Activated naive CD4-positive, alpha-beta T cell treated with anti-CD3 and anti-CD28 coated beads, Interleukin-2, amount 10 ng/mL, durations not matched to agents 7 days and 5 days (primary cell): ENCODE measurements at regions of chr11 and their contacts with region 1.

Region 1: DNA sequence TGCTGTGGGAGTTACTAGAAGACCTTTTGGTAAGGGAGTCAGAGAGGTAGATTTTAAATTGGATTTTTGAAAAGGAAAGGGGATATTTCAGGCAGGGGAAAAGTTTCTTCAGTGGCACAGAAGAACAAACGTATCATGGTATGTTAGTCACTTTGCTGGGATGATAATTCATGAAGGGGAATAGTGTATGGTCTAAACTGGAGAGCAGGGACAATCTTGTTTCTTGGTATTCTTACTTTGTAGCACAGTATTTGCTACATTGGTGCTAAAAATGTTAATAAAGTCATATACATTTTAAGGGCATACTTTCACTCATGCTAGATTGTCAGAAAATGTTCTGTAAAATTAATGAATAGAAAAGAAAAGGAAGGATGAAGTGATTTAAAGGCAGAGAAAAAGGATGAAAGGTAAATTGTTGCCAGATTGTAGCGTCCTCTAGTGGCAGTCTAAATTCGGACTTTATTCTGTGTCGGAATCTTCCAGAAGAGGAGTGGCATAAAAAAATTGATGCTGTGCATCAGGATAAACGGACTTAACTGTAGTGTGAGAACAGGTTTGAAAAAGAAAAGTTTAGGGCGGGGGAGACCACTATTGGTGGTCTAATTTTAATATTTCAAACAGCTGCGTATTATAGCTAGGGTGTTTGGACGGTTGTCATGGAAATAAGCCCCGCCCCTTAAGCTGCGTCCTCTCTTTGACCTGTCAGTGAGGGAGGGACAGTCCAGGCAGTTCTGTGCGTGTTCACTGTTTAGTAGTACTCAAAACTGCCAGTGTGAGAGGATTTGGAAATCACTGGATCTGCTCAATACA is at the start of gene BCO2:
- DNase-seq: peak; percentile 59
- H3K4me3 Mint-ChIP-seq: no peak within 1 kb of the TSS
- H3K27ac Mint-ChIP-seq: no peak within 1 kb of the TSS
- H3K4me1 Mint-ChIP-seq: peaks cover 11% of the 10 kb centered on the region
- H3K27me3 Mint-ChIP-seq: peaks cover 28% of the 10 kb centered on the region

Region 2: GRCh38 chr11:112113539-112114457 is 61.2 kb before region 1 on chr11:
- CTCF ChIA-PET with region 1: interaction called, 13 read pairs
- DNase-seq: no peak
- H3K4me3 Mint-ChIP-seq: no peak overlapping the region
- H3K27ac Mint-ChIP-seq: no peak overlapping the region
- H3K4me1 Mint-ChIP-seq: peaks cover 12% of the 10 kb centered on the region
- H3K27me3 Mint-ChIP-seq: no peaks in the 10 kb centered on the region

Region 3: GRCh38 chr11:112132737-112133136 is 42.3 kb before region 1 on chr11:
- CTCF ChIA-PET with region 1: no interaction called
- DNase-seq: no peak
- H3K4me3 Mint-ChIP-seq: no peak overlapping the region
- H3K27ac Mint-ChIP-seq: no peak overlapping the region
- H3K4me1 Mint-ChIP-seq: peaks cover 4% of the 10 kb centered on the region
- H3K27me3 Mint-ChIP-seq: no peaks in the 10 kb centered on the region

Region 4: DNA sequence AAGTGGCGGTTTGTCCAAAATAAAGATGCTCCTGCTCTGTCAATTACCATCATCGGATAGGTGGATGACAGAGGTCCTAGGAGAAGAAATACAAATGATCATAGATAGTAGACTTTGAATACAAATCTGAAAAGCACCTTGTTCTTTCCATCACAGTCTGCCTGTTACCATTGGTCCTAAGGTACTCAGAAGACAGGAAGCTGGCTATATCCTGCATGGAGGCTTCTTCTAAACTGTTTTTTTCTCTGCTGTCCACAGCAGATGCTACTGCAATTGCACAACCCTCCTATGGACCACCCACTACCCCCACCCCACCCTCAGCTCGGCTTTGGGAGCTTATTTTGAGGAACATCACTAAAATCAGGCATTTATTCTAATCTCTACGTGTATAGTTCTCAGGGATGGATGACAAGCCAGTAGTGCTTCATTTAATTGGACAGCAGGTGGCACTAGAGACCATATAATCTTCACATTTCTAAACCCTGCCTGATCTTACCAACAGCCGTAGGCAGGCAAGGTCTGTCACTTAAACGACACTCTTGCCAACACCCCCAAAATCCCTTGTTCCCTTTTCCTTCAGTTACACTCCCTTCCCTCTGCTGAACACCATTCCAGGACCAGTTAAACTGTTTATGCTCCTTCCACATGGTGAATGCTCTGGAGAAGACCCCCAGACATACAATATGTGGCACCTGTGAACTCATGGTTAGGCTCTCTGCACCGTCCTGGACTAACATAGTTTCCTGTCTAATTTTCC is 44.7 kb after region 1 on chr11:
- CTCF ChIA-PET with region 1: no interaction called
- DNase-seq: peak; percentile 49
- H3K4me3 Mint-ChIP-seq: no peak overlapping the region
- H3K27ac Mint-ChIP-seq: no peak overlapping the region
- H3K4me1 Mint-ChIP-seq: peaks cover 6% of the 10 kb centered on the region
- H3K27me3 Mint-ChIP-seq: peaks cover 14% of the 10 kb centered on the region

Region 5: DNA sequence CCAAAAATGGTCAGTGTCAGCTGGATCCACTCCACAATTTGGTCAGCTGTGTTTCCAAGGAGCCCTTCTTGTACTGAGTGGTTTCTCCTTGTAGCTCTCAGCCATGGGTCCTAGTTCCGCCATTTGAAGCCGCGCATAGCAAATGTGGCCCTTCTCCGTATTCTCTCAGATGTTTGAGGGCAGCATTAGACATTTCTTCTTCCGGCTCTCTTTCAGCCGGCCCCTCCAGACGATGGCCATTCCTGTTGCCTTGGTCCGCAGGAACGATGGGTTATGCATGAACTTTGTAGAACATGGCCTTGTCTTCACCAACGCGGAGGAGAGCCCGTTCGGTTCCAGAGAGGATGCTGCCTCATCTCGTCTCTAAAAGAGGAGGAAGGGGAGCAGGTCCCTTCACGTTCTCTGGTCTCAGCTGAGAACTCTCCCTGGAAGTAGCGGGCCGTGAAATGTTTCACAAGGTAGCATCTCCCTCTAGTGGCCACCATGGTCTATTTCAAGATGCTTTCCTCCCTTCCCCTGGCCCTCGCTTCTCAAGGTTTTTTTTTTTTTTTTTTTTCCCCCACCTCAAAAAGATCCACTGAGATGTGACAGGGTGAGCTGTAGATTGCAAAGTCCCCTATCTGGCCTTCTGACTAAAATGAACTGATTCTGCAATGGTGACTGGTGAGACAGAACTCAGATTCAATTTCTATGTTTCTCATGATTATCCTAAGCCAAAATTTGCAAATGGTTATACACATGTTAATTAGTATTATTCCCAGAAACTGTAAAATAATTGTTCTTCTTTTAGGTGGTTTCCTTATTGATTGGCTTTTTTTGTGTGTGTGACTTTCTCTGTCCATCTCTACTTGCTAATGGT is 105.5 kb after region 1 on chr11:
- CTCF ChIA-PET with region 1: no interaction called
- DNase-seq: peak; percentile 77
- H3K4me3 Mint-ChIP-seq: peak overlapping the region; percentile 81
- H3K27ac Mint-ChIP-seq: peak overlapping the region; percentile 57
- H3K4me1 Mint-ChIP-seq: peaks cover 33% of the 10 kb centered on the region
- H3K27me3 Mint-ChIP-seq: peaks cover 7% of the 10 kb centered on the region